Gastrocnemius medialis (tissue), 4 donors: ENCODE measurements at regions of chr7 and their contacts with region 1.

Region 1: DNA sequence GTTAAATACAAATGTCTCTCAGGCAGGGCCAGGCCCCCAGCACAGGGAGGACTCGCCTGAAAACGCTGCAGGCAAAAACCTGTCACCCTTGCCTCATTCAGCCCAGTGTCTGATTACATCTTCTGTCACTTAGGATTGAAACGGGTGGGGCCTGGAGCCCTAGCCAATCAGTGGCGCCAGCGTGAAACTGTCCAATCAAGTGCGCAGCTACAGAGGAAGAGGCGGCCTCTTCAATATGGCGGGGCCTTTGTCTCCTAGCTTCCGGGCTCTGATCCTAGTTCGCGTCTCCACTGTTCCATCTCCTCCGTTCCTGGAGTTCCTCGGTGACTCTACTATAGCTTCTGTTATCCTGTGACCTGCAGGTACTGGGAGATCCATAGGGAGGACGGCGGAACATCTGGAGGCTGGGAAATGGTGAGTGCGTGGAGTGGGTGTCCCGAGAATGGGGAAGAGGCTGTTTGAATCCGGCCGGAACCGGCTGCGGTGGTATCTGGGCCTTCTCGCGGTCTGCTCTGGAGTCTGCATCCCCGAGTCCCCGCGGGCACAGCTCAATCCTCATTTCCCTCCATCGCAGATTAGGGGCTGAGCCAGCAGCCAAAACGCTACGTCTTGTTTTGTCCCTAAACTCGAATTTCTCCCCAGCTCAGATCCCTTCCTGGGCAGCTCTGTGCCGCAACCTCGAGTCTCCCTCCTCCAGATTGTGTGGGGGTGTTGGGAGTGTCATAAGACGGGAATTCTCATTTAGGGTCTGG is at the start of gene ZNF736:
- DNase-seq: peak; percentile 86 to 92
- ATAC-seq: peak; percentile 100
- H3K4me3 ChIP-seq: peak within 1 kb of the TSS; percentile 57 to 81 (median 65)
- H3K27ac ChIP-seq: peak within 1 kb of the TSS; percentile 29 to 64 (median 52)
- H3K4me1 ChIP-seq: peaks cover 13 to 19% of the 10 kb centered on the region in 2 donors
- H3K27me3 ChIP-seq: no peaks in the 10 kb centered on the region
- CTCF ChIP-seq: no peak
- POLR2A ChIP-seq: peak in 1 of 2 donors; percentile 18
- total RNA-seq, gene ZNF736: 2.2 to 7.8 (median 2.7) TPM

Region 2: GRCh38 chr7:63900394-63901203 is 413.3 kb before region 1 on chr7:
- in situ Hi-C with region 1: loop called in 1 of 4 experiments (anchors 25 kb)
- intact Hi-C with region 1: no loop called
- DNase-seq: peak; percentile 79 to 90
- ATAC-seq: peak; percentile 98 to 99
- H3K4me3 ChIP-seq: peak overlapping the region; percentile 21 to 72 (median 66)
- H3K27ac ChIP-seq: peak overlapping the region in 3 of 4 donors; percentile 67 to 72 (median 68)
- H3K4me1 ChIP-seq: peaks cover 0 to 3% of the 10 kb centered on the region in 2 donors
- H3K27me3 ChIP-seq: no peaks in the 10 kb centered on the region
- CTCF ChIP-seq: no peak
- POLR2A ChIP-seq: no peak

Region 3: DNA sequence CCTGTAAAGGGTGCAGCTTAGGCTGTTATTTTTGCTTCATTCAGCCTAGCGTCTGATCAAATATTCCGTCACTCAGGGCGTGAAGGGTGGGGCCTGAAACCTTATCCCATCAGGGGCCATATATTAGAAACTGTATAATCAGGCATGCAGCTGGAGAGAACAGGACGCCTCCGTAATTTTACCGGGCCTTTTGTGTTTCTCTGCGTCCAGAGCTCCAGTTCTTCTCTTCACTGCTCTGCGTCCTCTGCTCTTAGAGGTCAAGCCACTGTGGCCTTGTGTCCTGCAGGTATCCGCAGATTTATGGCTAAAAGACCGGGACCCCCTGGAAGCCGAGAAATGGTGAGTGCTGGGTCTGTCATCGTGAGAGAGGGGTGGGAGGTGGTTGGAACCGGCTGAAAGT is 107.0 kb before region 1 on chr7 and contains the start of gene ZNF735:
- in situ Hi-C with region 1: no loop called
- intact Hi-C with region 1: no loop called
- DNase-seq: no peak
- ATAC-seq: no peak
- H3K4me3 ChIP-seq: no peak within 1 kb of the TSS
- H3K27ac ChIP-seq: no peak within 1 kb of the TSS
- H3K4me1 ChIP-seq: no peaks in the 10 kb centered on the region
- H3K27me3 ChIP-seq: no peaks in the 10 kb centered on the region
- CTCF ChIP-seq: no peak
- POLR2A ChIP-seq: no peak
- total RNA-seq, gene ZNF735: not detected

Region 4: DNA sequence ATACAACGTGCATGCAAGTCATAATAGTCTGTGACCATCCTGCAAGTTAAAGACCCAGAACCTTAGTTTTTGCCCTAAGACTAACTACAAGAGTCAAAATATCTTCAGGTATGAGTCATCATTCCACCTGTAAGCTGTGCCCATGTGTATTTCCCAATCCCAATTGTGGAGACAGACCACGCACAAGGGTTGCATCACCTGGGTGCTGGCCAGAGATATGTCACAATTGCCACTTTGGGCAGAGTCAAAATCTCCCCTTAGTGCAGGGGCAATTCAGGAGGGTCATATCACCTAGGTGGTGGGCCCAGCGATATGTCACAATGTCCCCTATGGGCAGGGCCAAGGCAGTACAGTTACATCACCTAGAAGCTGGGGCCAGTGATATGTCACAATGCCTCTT is 72.8 kb before region 1 on chr7:
- in situ Hi-C with region 1: no loop called
- intact Hi-C with region 1: no loop called
- DNase-seq: no peak
- ATAC-seq: no peak
- H3K4me3 ChIP-seq: no peak overlapping the region
- H3K27ac ChIP-seq: no peak overlapping the region
- H3K4me1 ChIP-seq: no peaks in the 10 kb centered on the region
- H3K27me3 ChIP-seq: no peaks in the 10 kb centered on the region
- CTCF ChIP-seq: no peak
- POLR2A ChIP-seq: no peak

Region 5: GRCh38 chr7:64366921-64367320 is 53.0 kb after region 1 on chr7:
- in situ Hi-C with region 1: no loop called
- intact Hi-C with region 1: no loop called
- DNase-seq: no peak
- ATAC-seq: no peak
- H3K4me3 ChIP-seq: no peak overlapping the region
- H3K27ac ChIP-seq: no peak overlapping the region
- H3K4me1 ChIP-seq: no peaks in the 10 kb centered on the region
- H3K27me3 ChIP-seq: no peaks in the 10 kb centered on the region
- CTCF ChIP-seq: no peak
- POLR2A ChIP-seq: no peak

Region 6: GRCh38 chr7:64541438-64542359 is 227.8 kb after region 1 on chr7:
- in situ Hi-C with region 1: loop called in 1 of 4 experiments (anchors 25 kb)
- intact Hi-C with region 1: no loop called
- DNase-seq: peak; percentile 10 to 42
- ATAC-seq: peak; percentile 87 to 88
- H3K4me3 ChIP-seq: no peak overlapping the region
- H3K27ac ChIP-seq: peak overlapping the region; percentile 27 to 73 (median 57)
- H3K4me1 ChIP-seq: peaks cover 4 to 10% of the 10 kb centered on the region in 2 donors
- H3K27me3 ChIP-seq: no peaks in the 10 kb centered on the region
- CTCF ChIP-seq: no peak
- POLR2A ChIP-seq: no peak

Region 7: DNA sequence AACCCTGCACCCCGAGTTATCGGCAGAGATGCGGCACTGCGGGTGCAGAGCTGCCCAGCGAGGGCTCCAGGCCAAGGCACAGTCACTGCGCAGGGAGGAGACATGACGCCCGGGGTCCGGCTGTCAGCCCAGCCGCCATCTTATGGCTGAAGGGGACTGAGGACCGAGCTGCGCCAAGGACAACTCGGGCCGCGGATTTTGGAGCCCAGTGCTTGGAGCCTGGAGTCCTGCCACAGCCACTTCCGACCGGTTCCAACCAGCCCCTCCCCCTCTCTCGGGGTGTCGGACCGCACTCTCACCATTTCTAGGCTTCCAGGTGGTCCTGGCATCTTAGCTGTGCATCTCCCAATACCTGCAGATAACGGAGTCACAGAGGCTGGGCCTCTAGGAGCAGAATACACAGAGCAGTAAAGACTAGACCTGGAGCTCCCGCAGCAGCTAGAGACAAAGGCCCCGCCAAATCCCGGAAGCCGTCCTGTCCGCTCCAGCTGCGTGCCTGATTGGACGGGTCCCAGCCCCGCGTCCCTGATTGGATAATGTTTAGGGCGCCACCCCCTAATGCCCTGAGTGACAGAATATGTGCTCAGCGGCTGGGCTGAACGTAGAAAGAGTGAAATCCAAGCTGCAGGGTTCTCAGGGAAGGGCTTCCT is 248.8 kb after region 1 on chr7 and contains the start of gene ZNF680:
- in situ Hi-C with region 1: loop called in 3 of 4 experiments (anchors 25 kb)
- intact Hi-C with region 1: loop called (anchors 2 kb)
- DNase-seq: peak; percentile 95 to 97
- ATAC-seq: peak; percentile 94 to 95
- H3K4me3 ChIP-seq: peak within 1 kb of the TSS; percentile 65 to 82 (median 72)
- H3K27ac ChIP-seq: peak within 1 kb of the TSS; percentile 85 to 90 (median 88)
- H3K4me1 ChIP-seq: peaks cover 28 to 37% of the 10 kb centered on the region in 2 donors
- H3K27me3 ChIP-seq: no peaks in the 10 kb centered on the region
- CTCF ChIP-seq: no peak
- POLR2A ChIP-seq: peak; percentile 77 to 78
- total RNA-seq, gene ZNF680: 10.0 to 34.3 (median 14.2) TPM

Region 8: GRCh38 chr7:64665980-64666662 is 352.2 kb after region 1 on chr7 and contains the start of gene ZNF107:
- in situ Hi-C with region 1: loop called in 1 of 4 experiments (anchors 25 kb)
- intact Hi-C with region 1: no loop called
- DNase-seq: peak; percentile 87 to 92
- ATAC-seq: peak; percentile 100
- H3K4me3 ChIP-seq: peak within 1 kb of the TSS; percentile 72 to 87 (median 76)
- H3K27ac ChIP-seq: peak within 1 kb of the TSS; percentile 52 to 70 (median 66)
- H3K4me1 ChIP-seq: peaks cover 3 to 4% of the 10 kb centered on the region in 2 donors
- H3K27me3 ChIP-seq: no peaks in the 10 kb centered on the region
- CTCF ChIP-seq: no peak
- POLR2A ChIP-seq: peak in 1 of 2 donors; percentile 54
- total RNA-seq, gene ZNF107: 0.49 to 1.6 (median 0.77) TPM

Region 9: GRCh38 chr7:64794171-64794844 is 480.4 kb after region 1 on chr7 and contains the start of gene ZNF138:
- in situ Hi-C with region 1: loop called in 1 of 4 experiments (anchors 25 kb)
- intact Hi-C with region 1: loop called (anchors 10 kb)
- DNase-seq: peak; percentile 95 to 96
- ATAC-seq: peak; percentile 99 to 100
- H3K4me3 ChIP-seq: peak within 1 kb of the TSS; percentile 59 to 97 (median 71)
- H3K27ac ChIP-seq: peak within 1 kb of the TSS; percentile 71 to 88 (median 82)
- H3K4me1 ChIP-seq: peaks cover 6 to 20% of the 10 kb centered on the region in 2 donors
- H3K27me3 ChIP-seq: no peaks in the 10 kb centered on the region
- CTCF ChIP-seq: peak in 1 of 5 experiments; percentile 25
- POLR2A ChIP-seq: peak; percentile 53 to 67
- total RNA-seq, gene ZNF138: 4.5 to 11.6 (median 6.8) TPM

Region 10: DNA sequence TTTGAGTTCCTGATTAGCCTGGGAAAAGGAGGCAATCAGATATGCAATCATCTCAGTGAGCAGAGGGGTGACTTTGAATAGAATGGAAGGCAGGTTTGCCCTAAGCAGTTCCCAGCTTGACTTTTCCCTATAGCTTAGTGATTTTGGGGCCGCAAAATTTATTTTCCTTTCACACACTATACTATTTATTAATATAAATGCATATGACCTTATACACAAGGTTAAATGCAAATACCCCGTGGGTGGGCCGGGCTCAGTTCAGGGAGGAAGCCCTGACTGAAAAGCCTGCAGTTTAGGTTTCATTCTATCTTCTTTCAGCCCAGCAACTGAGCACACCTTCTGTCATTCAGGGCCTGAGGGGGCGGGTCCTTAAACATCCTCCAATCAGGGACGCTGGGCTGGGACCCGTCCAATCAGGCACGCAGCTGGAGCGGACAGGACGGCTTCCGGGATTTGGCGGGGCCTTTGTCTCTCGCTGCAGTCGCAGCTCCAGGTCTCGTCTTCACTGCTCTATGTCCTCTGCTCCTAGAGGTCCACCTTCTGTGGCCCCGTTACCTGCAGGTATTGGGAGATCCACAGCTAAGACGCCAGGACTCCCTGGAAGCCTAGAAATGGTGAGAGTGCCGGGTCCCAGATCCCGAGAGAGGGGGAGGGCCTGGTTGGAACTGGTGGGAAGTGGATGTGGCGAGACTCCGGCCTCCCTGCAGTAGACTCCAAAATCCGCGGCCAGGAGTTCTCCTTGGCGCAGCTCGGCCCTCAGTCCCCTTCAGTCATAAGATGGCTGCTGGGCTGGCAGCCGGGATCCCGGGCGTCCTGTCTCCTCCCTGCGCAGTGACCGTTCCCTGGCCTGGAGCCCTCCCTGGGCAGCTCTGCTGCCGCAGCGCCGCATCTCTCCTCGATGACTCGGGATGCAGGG is 589.1 kb after region 1 on chr7 and contains the start of gene ZNF273:
- in situ Hi-C with region 1: loop called in 1 of 4 experiments (anchors 25 kb)
- intact Hi-C with region 1: no loop called
- DNase-seq: peak; percentile 90 to 91
- ATAC-seq: peak; percentile 93 to 97
- H3K4me3 ChIP-seq: peak within 1 kb of the TSS; percentile 64 to 95 (median 78)
- H3K27ac ChIP-seq: peak within 1 kb of the TSS; percentile 65 to 84 (median 80)
- H3K4me1 ChIP-seq: peaks cover 0 to 32% of the 10 kb centered on the region in 2 donors
- H3K27me3 ChIP-seq: no peaks in the 10 kb centered on the region
- CTCF ChIP-seq: no peak
- POLR2A ChIP-seq: peak; percentile 53 to 66
- total RNA-seq, gene ZNF273: 0.29 to 9.3 (median 2.3) TPM